GM12878 (cell line): ENCODE measurements at regions of chr12 and their contacts with region 1.

Region 1: DNA sequence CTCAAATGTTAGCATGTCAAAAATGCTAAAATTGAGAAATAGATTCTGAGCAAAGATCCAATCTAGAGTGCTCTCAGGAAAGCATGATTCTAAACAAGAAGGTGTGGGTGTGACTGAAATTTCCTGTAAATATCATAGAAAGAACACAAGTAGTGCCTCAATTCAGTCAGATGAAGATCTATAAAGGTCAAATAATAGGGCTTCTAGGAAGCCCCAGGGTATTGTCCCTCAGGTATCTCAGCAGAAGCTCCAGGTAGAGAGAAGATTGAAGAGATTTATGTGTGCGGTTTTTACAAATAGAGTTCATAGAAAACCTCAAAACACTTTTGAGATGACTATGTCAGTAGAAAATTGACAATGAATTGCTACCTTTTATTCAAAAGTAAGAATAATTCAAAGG is 13.0 kb downstream of the KLRD1 start:
- DNase-seq: no peak
- ATAC-seq: peak; percentile 57
- H3K4me3 ChIP-seq: no peak overlapping the region
- H3K27ac ChIP-seq: no peak overlapping the region
- H3K4me1 ChIP-seq: 0 out of 2 replicates have a peak, but pooled peaks cover 6% of the 10 kb centered on the region
- H3K27me3 ChIP-seq: no peaks in the 10 kb centered on the region
- CTCF ChIP-seq: no peak
- EP300 ChIP-seq: no peak
- POLR2A ChIP-seq: no peak
- RAD21 ChIP-seq: 0 out of 2 replicates have a peak, but pooled peaks have one; percentile 0

Region 2: GRCh38 chr12:10354502-10354901 is 33.9 kb after region 1 on chr12:
- CTCF ChIA-PET with region 1: no interaction called
- POLR2A ChIA-PET with region 1: no interaction called
- RAD21 ChIA-PET with region 1: no interaction called
- SMC1A ChIA-PET with region 1: no interaction called
- in situ Hi-C with region 1: no loop called
- intact Hi-C with region 1: loop called (anchors 1 kb)
- DNase-seq: no peak
- ATAC-seq: no peak
- H3K4me3 ChIP-seq: no peak overlapping the region
- H3K27ac ChIP-seq: no peak overlapping the region
- H3K4me1 ChIP-seq: no peaks in the 10 kb centered on the region
- H3K27me3 ChIP-seq: no peaks in the 10 kb centered on the region
- CTCF ChIP-seq: no peak
- EP300 ChIP-seq: no peak
- POLR2A ChIP-seq: no peak
- RAD21 ChIP-seq: no peak